ENCODE measurements at regions of chr10 and their contacts with region 1.

Region 1: DNA sequence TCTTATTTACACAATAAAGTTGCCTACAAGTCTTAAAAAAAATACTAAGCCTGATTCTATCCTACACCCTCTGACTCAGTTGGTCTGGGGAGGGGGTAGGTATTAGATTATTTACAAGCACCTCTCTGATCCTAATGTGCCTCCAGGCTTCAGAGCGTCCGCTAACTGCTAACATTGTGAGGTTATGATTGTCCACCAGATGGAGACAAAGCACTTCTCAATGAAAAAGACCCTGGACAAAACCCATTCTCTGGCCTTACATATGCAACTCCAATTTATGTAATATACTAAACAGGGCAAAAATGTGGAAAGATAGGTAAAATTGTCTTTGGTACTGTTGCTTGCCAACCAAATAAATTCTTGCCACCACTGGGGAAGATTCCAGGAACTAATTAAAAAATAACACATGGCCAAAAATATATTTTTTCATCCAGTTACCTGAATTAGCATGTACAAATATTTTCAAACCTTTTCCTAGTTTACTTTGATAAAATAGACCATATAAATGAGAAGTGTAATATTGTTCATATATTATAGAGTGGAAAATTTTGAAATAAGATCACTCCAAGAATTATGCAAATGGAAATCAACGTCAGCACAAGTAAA is 92.4 kb downstream of the KIF20B start:
- H3K4me3 Mint-ChIP-seq: no peak overlapping the region
- H3K27ac Mint-ChIP-seq: no peak overlapping the region
- H3K4me1 Mint-ChIP-seq: no peaks in the 10 kb centered on the region
- H3K27me3 Mint-ChIP-seq: no peaks in the 10 kb centered on the region

Region 2: GRCh38 chr10:90138844-90139243 is 345.1 kb after region 1 on chr10:
- intact Hi-C with region 1: loop called (anchors 2 kb)
- H3K4me3 Mint-ChIP-seq: no peak overlapping the region
- H3K27ac Mint-ChIP-seq: no peak overlapping the region
- H3K4me1 Mint-ChIP-seq: no peaks in the 10 kb centered on the region
- H3K27me3 Mint-ChIP-seq: peaks cover 2% of the 10 kb centered on the region

Region 3: GRCh38 chr10:90592638-90593302 is 799.0 kb after region 1 on chr10:
- intact Hi-C with region 1: loop called (anchors 2 kb)
- H3K4me3 Mint-ChIP-seq: no peak overlapping the region
- H3K27ac Mint-ChIP-seq: no peak overlapping the region
- H3K4me1 Mint-ChIP-seq: no peaks in the 10 kb centered on the region
- H3K27me3 Mint-ChIP-seq: peaks cover 1% of the 10 kb centered on the region

Region 4: GRCh38 chr10:90642136-90642535 is 848.4 kb after region 1 on chr10:
- intact Hi-C with region 1: no loop called
- H3K4me3 Mint-ChIP-seq: no peak overlapping the region
- H3K27ac Mint-ChIP-seq: no peak overlapping the region
- H3K4me1 Mint-ChIP-seq: no peaks in the 10 kb centered on the region
- H3K27me3 Mint-ChIP-seq: no peaks in the 10 kb centered on the region

Region 5: GRCh38 chr10:90751107-90751997 is 957.6 kb after region 1 on chr10:
- intact Hi-C with region 1: loop called (anchors 5 kb)
- H3K4me3 Mint-ChIP-seq: no peak overlapping the region
- H3K27ac Mint-ChIP-seq: no peak overlapping the region
- H3K4me1 Mint-ChIP-seq: peaks cover 5% of the 10 kb centered on the region
- H3K27me3 Mint-ChIP-seq: peaks cover 17% of the 10 kb centered on the region

Region 6: DNA sequence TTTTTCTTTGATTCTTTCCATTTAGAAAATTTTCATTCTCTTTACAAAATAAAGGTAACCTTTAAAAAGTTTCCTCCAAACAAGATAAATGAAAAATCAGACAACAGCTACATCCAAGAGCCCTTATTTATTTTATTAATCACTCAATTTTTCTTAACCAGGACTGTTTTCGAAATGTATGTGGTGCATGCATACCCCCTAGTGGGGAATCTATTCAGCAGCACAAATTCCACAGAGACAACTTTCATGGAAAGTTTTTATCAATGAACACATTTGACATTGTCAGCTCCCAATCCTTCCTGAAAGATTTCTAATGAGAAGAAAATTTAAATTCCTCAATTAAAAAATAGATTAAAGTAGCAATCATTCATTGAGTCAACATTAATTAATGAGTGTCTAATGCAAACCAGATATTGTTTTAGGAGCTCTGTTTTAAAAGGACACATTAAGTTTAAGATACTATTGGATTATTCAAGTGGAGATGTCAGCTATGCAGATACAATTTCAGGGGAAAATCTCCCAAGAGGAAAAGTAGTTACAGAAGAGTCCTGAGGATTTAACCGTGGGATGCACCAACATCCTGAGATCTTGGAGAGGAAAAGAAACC is 1069.3 kb after region 1 on chr10:
- intact Hi-C with region 1: loop called (anchors 2 kb)
- H3K4me3 Mint-ChIP-seq: no peak overlapping the region
- H3K27ac Mint-ChIP-seq: no peak overlapping the region
- H3K4me1 Mint-ChIP-seq: peaks cover 6% of the 10 kb centered on the region
- H3K27me3 Mint-ChIP-seq: peaks cover 21% of the 10 kb centered on the region